Left cardiac atrium (tissue), 4 donors: ENCODE measurements at regions of chr17 and their contacts with region 1.

Region 1: GRCh38 chr17:68247445-68248198 is at the start of gene AMZ2:
- DNase-seq: peak; percentile 95
- ATAC-seq: peak; percentile 99
- total RNA-seq, gene AMZ2: 71.1 to 77.5 TPM

Region 2: GRCh38 chr17:68205251-68205807 is 42.3 kb before region 1 on chr17:
- intact Hi-C with region 1: loop called in 1 of 2 experiments (anchors 5 kb)
- DNase-seq: peak; percentile 95
- ATAC-seq: peak; percentile 93 to 95